Motor neuron (in vitro differentiated cells): ENCODE measurements at regions of chr2 and their contacts with region 1.

Region 1: GRCh38 chr2:188524519-188525113 is 232.9 kb downstream of the GULP1 start:
- ATAC-seq: peak in 4 of 8 experiments; percentile 24 to 68 (median 57)
- H3K4me3 ChIP-seq: no peak overlapping the region
- H3K27ac ChIP-seq: no peak overlapping the region
- H3K4me1 ChIP-seq: no peaks in the 10 kb centered on the region

Region 2: GRCh38 chr2:187499941-187500532 is 1024.6 kb before region 1 on chr2:
- in situ Hi-C with region 1: loop called in 2 of 9 experiments (anchors 25 kb)
- ATAC-seq: peak in 5 of 8 experiments; percentile 47 to 68 (median 62)
- H3K4me3 ChIP-seq: no peak overlapping the region
- H3K27ac ChIP-seq: no peak overlapping the region
- H3K4me1 ChIP-seq: no peaks in the 10 kb centered on the region

Region 3: DNA sequence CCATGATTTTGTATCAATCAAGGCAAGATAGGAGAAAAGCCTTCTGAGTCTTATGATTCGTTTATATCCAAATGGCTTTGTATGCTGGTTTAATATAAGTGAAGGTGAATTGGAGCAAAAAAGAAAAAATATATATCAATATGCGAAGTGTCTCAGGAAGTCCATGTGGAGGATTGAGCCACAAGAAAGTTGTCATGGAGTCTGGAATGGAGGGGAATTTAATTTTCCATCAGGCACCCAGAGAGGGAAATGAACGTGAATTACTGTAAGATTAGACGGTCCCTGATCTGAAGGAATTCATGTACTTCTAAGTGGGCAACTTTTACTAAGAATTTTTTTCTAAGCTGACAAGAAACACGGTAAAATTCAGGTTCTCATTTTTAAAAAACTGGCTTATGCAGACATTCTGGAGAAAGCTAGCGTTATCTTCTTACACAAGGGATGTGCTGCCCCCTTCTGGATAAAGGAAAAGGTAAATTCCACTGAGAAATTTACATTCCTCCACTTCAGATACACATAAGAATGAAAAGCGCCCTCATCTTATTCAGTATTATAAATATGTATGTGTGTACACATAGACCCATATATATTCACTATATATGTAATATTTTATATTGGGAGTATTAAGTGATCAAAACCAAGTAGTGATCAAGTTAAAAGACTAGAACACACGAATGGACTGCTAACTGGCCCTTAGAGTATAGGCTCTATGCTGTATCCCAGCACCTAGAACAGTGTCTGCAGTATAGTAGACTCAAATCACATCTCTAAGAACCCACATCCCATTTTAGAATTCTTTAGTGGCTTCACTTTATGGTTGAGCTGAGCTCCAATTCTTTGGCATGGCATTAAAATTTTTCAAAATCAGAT is 681.4 kb before region 1 on chr2:
- in situ Hi-C with region 1: loop called in 1 of 9 experiments (anchors 25 kb)
- ATAC-seq: peak in 3 of 8 experiments; percentile 45 to 79 (median 66)
- H3K4me3 ChIP-seq: no peak overlapping the region
- H3K27ac ChIP-seq: no peak overlapping the region
- H3K4me1 ChIP-seq: no peaks in the 10 kb centered on the region

Region 4: DNA sequence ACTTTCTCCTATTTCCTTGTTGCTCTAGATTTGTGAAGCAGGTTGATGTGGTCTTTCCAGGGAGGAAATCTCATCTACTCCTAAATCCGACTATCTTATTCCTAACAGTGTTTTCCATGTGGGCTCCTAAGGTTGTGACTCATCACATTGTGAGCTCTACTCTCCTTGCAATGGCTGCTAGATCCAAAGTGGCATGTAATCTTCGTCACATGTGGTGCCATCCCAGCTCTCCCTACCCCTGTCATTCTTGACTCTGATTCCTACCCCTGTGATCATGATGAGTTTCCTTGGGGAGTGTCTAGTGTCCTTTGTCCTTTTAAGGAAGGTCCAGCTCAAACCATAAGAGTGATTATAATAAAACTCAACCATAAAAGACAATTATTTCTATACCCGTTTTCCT is 280.2 kb before region 1 on chr2:
- in situ Hi-C with region 1: no loop called
- ATAC-seq: no peak
- H3K4me3 ChIP-seq: no peak overlapping the region
- H3K27ac ChIP-seq: no peak overlapping the region
- H3K4me1 ChIP-seq: no peaks in the 10 kb centered on the region

Region 5: GRCh38 chr2:188291617-188292347 is 232.8 kb before region 1 on chr2 and contains the start of gene GULP1:
- in situ Hi-C with region 1: loop called in 1 of 9 experiments (anchors 25 kb)
- ATAC-seq: peak; percentile 59 to 86 (median 81)
- H3K4me3 ChIP-seq: peak within 1 kb of the TSS; percentile 54 to 72 (median 60)
- H3K27ac ChIP-seq: peak within 1 kb of the TSS in 1 of 2 donors; percentile 73
- H3K4me1 ChIP-seq: peaks cover 4 to 15% of the 10 kb centered on the region in 2 donors
- total RNA-seq, gene GULP1: 8.1 to 71.0 (median 25.7) TPM

Region 6: DNA sequence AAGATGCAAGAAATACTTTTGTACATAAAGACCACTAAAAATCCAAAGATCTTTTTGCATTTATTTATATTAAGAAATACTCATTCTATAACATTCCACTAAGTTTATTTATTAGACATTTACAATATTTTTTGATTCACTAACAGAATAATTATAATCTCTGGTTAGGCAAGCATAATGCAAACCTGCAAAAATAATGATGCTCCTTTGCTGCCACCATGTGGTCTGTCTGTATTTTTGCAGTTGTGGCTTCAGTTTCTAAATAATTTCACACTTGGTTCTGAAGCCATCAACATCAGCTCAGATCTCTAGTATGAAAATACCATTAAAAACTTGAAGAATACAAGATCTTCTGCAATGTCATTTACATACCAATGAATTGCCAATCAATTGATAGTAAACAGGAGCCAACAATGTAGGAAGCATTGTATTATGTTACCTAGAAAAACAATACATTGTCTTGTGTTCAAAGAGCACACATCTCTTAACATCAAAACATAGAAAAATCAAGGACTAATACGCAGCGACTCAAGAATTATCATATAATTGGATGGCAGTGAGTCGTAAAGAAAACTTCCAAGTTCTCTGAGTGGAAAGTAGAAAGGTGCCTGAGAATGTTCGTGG is 887.8 kb after region 1 on chr2:
- in situ Hi-C with region 1: loop called in 4 of 9 experiments (anchors 10 to 25 kb)
- ATAC-seq: peak in 4 of 8 experiments; percentile 32 to 62 (median 36)
- H3K4me3 ChIP-seq: no peak overlapping the region
- H3K27ac ChIP-seq: no peak overlapping the region
- H3K4me1 ChIP-seq: no peaks in the 10 kb centered on the region